PC-9 (cell line): ENCODE measurements at regions of chr19 and their contacts with region 1.

Region 1: DNA sequence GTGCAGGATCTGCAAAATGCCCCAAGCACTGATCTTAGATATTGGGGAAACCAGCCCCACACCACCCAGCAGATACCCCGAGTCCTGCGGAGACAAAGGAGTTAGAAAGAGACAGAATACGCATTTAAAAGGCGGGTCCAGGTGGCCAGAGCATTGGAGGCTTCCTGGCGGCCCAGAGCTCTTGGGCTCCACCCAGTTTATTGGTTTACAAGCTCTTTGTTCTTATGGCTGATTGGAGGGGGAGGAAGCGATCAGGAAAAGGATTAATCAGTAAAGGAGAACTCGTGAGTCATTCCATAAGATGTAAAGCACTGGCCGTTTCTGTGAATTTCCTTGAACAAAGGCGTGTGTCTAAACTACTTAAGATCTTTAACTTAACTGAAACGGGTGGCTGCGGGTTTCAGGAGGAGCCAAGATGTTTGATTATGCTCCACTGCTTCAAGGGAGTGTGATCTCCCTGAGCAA is 926 bp downstream of the ZNF587 start:
- DNase-seq: peak; percentile 25 to 84
- H3K4me3 ChIP-seq: peak overlapping the region; percentile 78
- H3K27ac ChIP-seq: peak overlapping the region; percentile 55
- H3K4me1 ChIP-seq: peaks cover 9% of the 10 kb centered on the region; the same call in 1 of the 2 replicates
- H3K27me3 ChIP-seq: no peaks in the 10 kb centered on the region
- CTCF ChIP-seq: no peak

Region 2: DNA sequence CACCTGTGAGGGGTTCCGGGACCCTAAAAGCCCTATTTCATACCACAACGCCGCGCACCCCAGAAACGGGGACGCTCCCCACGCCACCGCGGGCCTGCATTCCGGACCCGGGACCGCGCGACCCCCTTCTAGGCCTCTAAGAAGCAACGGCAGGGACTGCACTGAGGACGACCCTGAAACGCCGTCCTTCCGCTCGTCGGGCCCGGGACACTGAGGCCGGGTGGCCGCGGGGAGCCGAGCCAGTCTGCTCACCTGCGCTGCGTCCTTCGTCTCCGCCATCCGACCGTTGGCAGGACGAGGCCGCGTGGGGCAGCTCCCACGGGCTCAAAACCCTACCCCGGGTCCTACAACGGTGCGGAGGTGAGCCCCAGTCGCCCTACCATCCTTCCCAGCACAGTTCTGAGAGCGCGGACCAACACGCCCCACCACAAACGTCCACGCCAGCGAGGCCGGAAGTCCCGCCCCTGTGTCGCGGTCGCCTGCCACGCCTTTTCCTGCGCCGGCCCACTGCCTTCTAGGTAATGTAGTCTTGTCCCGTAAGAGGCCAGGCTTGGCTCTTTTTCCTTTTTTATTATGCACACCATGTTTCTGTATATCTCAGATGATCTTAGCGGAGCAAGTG is 291.1 kb before region 1 on chr19 and contains the start of gene ZNF550:
- CTCF ChIA-PET with region 1: no interaction called
- POLR2A ChIA-PET with region 1: no interaction called
- intact Hi-C with region 1: loop called (anchors 2 kb)
- DNase-seq: peak; percentile 83 to 93
- H3K4me3 ChIP-seq: peak within 1 kb of the TSS; percentile 90
- H3K27ac ChIP-seq: peak within 1 kb of the TSS; percentile 83
- H3K4me1 ChIP-seq: peaks cover 13% of the 10 kb centered on the region
- H3K27me3 ChIP-seq: no peaks in the 10 kb centered on the region; the same call in 1 of the 2 replicates
- CTCF ChIP-seq: no peak
- total RNA-seq, gene ZNF550: 18.2 and 19.8 TPM in 2 replicates

Region 3: DNA sequence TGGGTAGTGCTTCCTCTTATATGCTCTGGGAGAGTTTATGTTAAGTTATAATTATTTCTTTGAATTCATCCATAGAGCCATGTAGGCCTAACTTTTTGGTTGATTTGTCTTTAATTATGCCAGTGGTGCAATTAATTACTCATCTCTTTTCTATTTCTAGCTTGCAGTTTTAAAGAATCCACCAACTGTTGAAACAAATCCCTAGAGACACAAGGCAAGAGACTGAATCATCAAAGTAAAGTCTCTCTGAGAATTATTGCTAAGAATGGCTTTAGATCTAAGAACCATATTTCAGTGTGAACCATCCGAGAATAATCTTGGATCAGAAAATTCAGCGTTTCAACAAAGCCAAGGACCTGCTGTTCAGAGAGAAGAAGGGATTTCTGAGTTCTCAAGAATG is 174.7 kb before region 1 on chr19:
- CTCF ChIA-PET with region 1: interaction called, 16 read pairs
- POLR2A ChIA-PET with region 1: interaction called, 7 read pairs
- intact Hi-C with region 1: no loop called
- DNase-seq: no peak
- H3K4me3 ChIP-seq: no peak overlapping the region
- H3K27ac ChIP-seq: no peak overlapping the region
- H3K4me1 ChIP-seq: no peaks in the 10 kb centered on the region
- H3K27me3 ChIP-seq: no peaks in the 10 kb centered on the region
- CTCF ChIP-seq: no peak

Region 4: DNA sequence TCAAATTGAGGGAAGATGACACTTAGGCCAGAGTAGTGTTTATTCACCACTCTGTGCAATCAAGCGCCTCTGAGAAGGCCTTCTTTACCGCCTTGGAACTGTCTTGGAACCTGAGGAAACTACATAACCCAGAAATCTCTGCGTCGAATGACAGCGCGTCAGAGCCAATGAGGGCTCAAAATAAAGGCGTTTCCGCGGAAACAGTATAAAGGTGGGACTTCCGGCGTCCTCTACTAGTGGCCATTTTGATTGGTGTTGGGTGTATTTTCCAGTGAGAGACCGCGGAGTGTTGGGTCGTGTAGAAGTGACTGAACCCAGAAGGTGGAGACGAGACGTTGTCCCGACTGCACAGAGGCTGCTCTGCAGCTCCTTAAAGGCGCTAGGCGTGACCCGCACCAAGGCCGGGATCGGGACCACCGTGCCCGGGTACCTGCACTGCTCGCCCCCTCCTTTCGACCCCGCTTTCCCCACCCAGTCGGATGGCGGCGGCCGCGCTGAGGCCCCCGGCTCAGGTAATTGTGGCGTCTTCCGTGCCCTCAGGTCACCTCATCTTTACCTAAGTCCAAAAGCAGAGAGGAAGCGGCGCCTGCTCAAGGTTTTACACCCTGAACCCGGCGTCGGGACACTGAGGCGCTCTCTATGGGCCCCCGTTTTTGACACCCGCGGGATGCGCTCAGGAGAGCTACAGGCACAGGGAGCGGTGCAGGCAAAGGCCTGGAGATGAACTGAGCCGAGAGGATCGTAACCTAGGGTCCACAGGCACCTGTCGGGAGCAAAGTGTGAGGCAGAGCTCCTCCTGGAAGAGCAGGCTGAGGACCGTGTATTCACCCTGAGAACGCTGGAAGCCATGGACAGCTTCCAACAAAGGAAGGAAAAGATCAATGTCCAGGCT is 103.8 kb before region 1 on chr19 and contains the start of gene ZNF776:
- CTCF ChIA-PET with region 1: no interaction called
- POLR2A ChIA-PET with region 1: interaction called, 10 read pairs
- intact Hi-C with region 1: no loop called
- DNase-seq: peak; percentile 78 to 89
- H3K4me3 ChIP-seq: peak within 1 kb of the TSS; percentile 98
- H3K27ac ChIP-seq: peak within 1 kb of the TSS; percentile 24; the same call in 1 of the 2 replicates
- H3K4me1 ChIP-seq: peaks cover 10% of the 10 kb centered on the region; the same call in 1 of the 2 replicates
- H3K27me3 ChIP-seq: no peaks in the 10 kb centered on the region
- CTCF ChIP-seq: no peak
- total RNA-seq, gene ZNF776: 16.9 and 17.8 TPM in 2 replicates

Region 5: GRCh38 chr19:57830071-57830602 is 20.4 kb before region 1 on chr19 and contains the start of gene ZNF587B:
- CTCF ChIA-PET with region 1: no interaction called
- POLR2A ChIA-PET with region 1: no interaction called
- intact Hi-C with region 1: no loop called
- DNase-seq: peak in 1 of 2 experiments; percentile 47
- H3K4me3 ChIP-seq: no peak within 1 kb of the TSS
- H3K27ac ChIP-seq: no peak within 1 kb of the TSS
- H3K4me1 ChIP-seq: no peaks in the 10 kb centered on the region
- H3K27me3 ChIP-seq: no peaks in the 10 kb centered on the region
- CTCF ChIP-seq: peak; percentile 73
- total RNA-seq, gene ZNF587B: 21.2 and 25.2 TPM in 2 replicates